Tibial artery (tissue), 4 donors: ENCODE measurements at regions of chr18 and their contacts with region 1.

Region 1: GRCh38 chr18:14026199-14026598 is 106.0 kb downstream of the ZNF519 start:
- DNase-seq: no peak
- H3K4me3 ChIP-seq: no peak overlapping the region
- H3K27ac ChIP-seq: no peak overlapping the region
- H3K4me1 ChIP-seq: no peaks in the 10 kb centered on the region
- H3K27me3 ChIP-seq: no peaks in the 10 kb centered on the region
- CTCF ChIP-seq: no peak

Region 2: GRCh38 chr18:13879937-13880336 is 146.3 kb before region 1 on chr18:
- intact Hi-C with region 1: loop called (anchors 5 kb)
- DNase-seq: no peak
- H3K4me3 ChIP-seq: no peak overlapping the region
- H3K27ac ChIP-seq: no peak overlapping the region
- H3K4me1 ChIP-seq: no peaks in the 10 kb centered on the region
- H3K27me3 ChIP-seq: no peaks in the 10 kb centered on the region
- CTCF ChIP-seq: no peak

Region 3: GRCh38 chr18:13923221-13923620 is 103.0 kb before region 1 on chr18:
- intact Hi-C with region 1: no loop called
- DNase-seq: no peak
- H3K4me3 ChIP-seq: no peak overlapping the region
- H3K27ac ChIP-seq: no peak overlapping the region
- H3K4me1 ChIP-seq: no peaks in the 10 kb centered on the region
- H3K27me3 ChIP-seq: no peaks in the 10 kb centered on the region
- CTCF ChIP-seq: no peak